A673 (cell line): ENCODE measurements at regions of chr1 and their contacts with region 1.

Region 1: GRCh38 chr1:214584805-214585766 is 17.9 kb upstream of the CENPF start:
- DNase-seq: peak; percentile 80
- H3K4me3 ChIP-seq: no peak overlapping the region
- H3K27ac ChIP-seq: peak overlapping the region; percentile 42
- H3K4me1 ChIP-seq: peaks cover 43% of the 10 kb centered on the region
- H3K27me3 ChIP-seq: no peaks in the 10 kb centered on the region
- CTCF ChIP-seq: peak; percentile 82

Region 2: DNA sequence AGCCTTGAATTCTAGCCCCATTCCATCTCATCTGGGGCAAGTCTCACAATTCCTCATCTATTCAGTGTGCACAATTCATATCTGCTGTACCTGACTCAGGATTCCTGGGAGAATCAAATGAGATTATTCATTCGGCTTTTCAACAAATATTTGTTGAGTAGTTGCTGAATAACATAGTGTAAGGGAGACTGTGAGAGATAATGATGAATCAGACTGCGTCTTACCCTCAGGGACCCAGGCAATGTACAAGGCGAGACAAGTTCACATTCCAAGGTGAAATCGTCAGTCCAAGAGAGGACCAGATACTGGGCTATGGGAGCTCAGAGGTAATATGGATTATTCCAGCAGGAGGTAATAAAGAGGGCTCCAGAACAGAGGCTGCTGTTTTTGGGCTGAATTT is 371.9 kb before region 1 on chr1:
- CTCF ChIA-PET with region 1: no interaction called
- POLR2A ChIA-PET with region 1: no interaction called
- intact Hi-C with region 1: loop called (anchors 5 kb)
- DNase-seq: no peak
- H3K4me3 ChIP-seq: no peak overlapping the region
- H3K27ac ChIP-seq: no peak overlapping the region
- H3K4me1 ChIP-seq: no peaks in the 10 kb centered on the region
- H3K27me3 ChIP-seq: peaks cover 13% of the 10 kb centered on the region
- CTCF ChIP-seq: no peak

Region 3: DNA sequence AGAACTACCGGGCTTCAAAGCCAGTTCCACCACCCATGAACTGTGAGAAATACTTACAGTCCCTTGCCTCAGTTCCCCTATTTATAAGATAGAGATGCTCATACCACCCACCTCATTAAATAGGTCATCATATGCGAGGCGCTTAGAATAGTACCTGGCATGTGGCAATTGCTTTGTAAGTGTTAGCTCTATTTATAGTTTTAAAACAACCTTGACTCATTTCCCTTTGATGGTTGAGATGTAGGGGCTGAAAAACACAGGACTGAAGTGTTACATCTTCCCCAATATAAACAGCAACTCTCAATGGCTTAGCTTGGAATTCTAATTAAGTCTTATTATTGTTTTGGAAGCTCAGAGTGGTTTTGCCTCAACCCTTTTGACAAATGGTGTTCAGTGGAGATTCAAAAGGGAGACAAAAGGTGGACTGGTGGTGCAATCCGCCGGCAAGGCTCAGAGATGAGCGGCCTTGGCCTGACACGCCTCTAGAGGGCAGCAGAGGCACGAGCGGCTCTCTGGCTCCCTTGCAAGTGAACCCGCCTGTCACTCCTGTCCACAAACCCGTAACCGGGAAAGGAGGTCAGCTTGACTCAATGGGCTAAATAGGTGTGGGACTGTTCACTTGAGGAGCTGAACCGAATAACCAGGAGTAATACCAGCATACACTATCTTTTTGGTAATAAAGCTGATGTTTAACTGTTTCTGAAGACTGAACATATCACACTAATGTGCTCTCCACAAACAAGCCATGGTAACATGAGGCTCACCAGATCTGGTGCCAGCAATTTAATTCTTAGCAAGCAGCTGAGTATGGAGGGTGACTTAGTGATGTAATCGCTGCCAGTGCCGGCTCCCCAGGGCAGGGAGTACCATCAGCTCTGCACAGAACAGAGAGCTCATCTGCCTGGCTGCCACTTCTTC is 323.6 kb before region 1 on chr1:
- CTCF ChIA-PET with region 1: no interaction called
- POLR2A ChIA-PET with region 1: no interaction called
- intact Hi-C with region 1: loop called (anchors 5 kb)
- DNase-seq: peak; percentile 87
- H3K4me3 ChIP-seq: peak overlapping the region; percentile 14
- H3K27ac ChIP-seq: no peak overlapping the region
- H3K4me1 ChIP-seq: peaks cover 27% of the 10 kb centered on the region
- H3K27me3 ChIP-seq: no peaks in the 10 kb centered on the region
- CTCF ChIP-seq: peak; percentile 99

Region 4: GRCh38 chr1:214354440-214355148 is 230.5 kb before region 1 on chr1:
- CTCF ChIA-PET with region 1: no interaction called
- POLR2A ChIA-PET with region 1: no interaction called
- intact Hi-C with region 1: no loop called
- DNase-seq: peak; percentile 51
- H3K4me3 ChIP-seq: no peak overlapping the region
- H3K27ac ChIP-seq: peak overlapping the region; percentile 21
- H3K4me1 ChIP-seq: peaks cover 18% of the 10 kb centered on the region
- H3K27me3 ChIP-seq: no peaks in the 10 kb centered on the region
- CTCF ChIP-seq: no peak

Region 5: GRCh38 chr1:214389734-214390133 is 195.4 kb before region 1 on chr1:
- CTCF ChIA-PET with region 1: interaction called, 5 read pairs
- POLR2A ChIA-PET with region 1: no interaction called
- intact Hi-C with region 1: loop called (anchors 2 kb)
- DNase-seq: no peak
- H3K4me3 ChIP-seq: no peak overlapping the region
- H3K27ac ChIP-seq: peak overlapping the region; percentile 10
- H3K4me1 ChIP-seq: peaks cover 18% of the 10 kb centered on the region
- H3K27me3 ChIP-seq: no peaks in the 10 kb centered on the region
- CTCF ChIP-seq: no peak

Region 6: GRCh38 chr1:214404154-214404553 is 180.9 kb before region 1 on chr1:
- CTCF ChIA-PET with region 1: no interaction called
- POLR2A ChIA-PET with region 1: no interaction called
- intact Hi-C with region 1: loop called (anchors 5 kb)
- DNase-seq: peak; percentile 97
- H3K4me3 ChIP-seq: no peak overlapping the region
- H3K27ac ChIP-seq: peak overlapping the region; percentile 95
- H3K4me1 ChIP-seq: peaks cover 92% of the 10 kb centered on the region
- H3K27me3 ChIP-seq: no peaks in the 10 kb centered on the region
- CTCF ChIP-seq: no peak

Region 7: GRCh38 chr1:214494706-214495105 is 90.4 kb before region 1 on chr1:
- CTCF ChIA-PET with region 1: no interaction called
- POLR2A ChIA-PET with region 1: no interaction called
- intact Hi-C with region 1: no loop called
- DNase-seq: no peak
- H3K4me3 ChIP-seq: no peak overlapping the region
- H3K27ac ChIP-seq: peak overlapping the region; percentile 20
- H3K4me1 ChIP-seq: peaks cover 57% of the 10 kb centered on the region
- H3K27me3 ChIP-seq: no peaks in the 10 kb centered on the region
- CTCF ChIP-seq: no peak

Region 8: GRCh38 chr1:214525535-214526019 is 59.5 kb before region 1 on chr1:
- CTCF ChIA-PET with region 1: interaction called, 10 read pairs
- POLR2A ChIA-PET with region 1: no interaction called
- intact Hi-C with region 1: no loop called
- DNase-seq: no peak
- H3K4me3 ChIP-seq: no peak overlapping the region
- H3K27ac ChIP-seq: peak overlapping the region; percentile 12
- H3K4me1 ChIP-seq: peaks cover 60% of the 10 kb centered on the region
- H3K27me3 ChIP-seq: no peaks in the 10 kb centered on the region
- CTCF ChIP-seq: no peak

Region 9: GRCh38 chr1:214573386-214574358 is 11.4 kb before region 1 on chr1:
- CTCF ChIA-PET with region 1: interaction called, 11 read pairs
- POLR2A ChIA-PET with region 1: no interaction called
- intact Hi-C with region 1: no loop called
- DNase-seq: peak; percentile 26
- H3K4me3 ChIP-seq: no peak overlapping the region
- H3K27ac ChIP-seq: peak overlapping the region; percentile 41
- H3K4me1 ChIP-seq: peaks cover 21% of the 10 kb centered on the region
- H3K27me3 ChIP-seq: no peaks in the 10 kb centered on the region
- CTCF ChIP-seq: no peak